RWPE1 (cell line): ENCODE measurements at regions of chr4 and their contacts with region 1.

Region 1: GRCh38 chr4:87848622-87849351 is 16.0 kb downstream of the MEPE start:
- DNase-seq: peak; percentile 55
- H3K27ac ChIP-seq: no peak overlapping the region
- CTCF ChIP-seq: peak; percentile 80

Region 2: DNA sequence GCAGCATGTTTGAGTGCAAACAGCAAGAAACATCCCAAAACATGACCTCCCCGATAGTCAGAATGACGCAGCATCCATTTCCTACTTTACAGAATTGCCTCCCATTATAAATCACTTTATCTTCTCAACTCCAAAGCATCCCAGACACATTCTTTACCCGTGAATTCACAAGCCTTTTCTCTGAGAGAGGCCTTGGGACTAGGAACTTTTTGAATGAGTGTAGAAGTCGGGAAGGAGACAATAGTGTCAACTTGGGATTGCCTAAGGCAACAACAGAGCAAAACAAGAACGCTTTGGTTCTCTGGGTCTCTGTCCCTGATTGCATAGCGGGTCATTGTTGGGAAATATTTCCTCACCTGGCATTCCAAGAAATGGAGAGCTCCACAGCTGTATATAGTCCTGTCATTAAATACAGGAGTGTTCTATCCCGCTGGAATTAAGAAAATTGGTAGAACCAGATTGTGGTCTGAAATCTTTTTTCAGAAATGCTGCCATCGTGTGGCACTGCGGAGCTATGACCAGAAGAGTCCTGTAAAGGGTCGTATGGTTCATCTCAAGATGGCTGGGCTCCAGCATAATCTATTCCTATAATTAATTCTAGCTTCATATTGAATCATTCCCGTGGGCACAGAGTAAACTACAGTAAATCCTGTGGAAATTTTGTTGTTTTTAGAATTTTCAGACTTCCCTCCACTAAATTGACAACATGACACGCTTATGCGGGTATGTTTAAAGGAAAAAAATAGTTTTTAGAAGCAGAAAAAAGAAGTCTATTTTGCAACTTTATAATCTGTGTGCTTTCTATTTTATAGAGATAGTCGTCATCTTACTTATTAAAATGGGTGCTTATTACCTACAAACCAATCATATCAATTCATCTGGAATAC is 124.7 kb after region 1 on chr4:
- CTCF ChIA-PET with region 1: interaction called, 23 read pairs
- POLR2A ChIA-PET with region 1: no interaction called
- DNase-seq: peak; percentile 46
- H3K27ac ChIP-seq: no peak overlapping the region
- CTCF ChIP-seq: peak; percentile 83

Region 3: GRCh38 chr4:87978681-87979080 is 129.9 kb after region 1 on chr4:
- CTCF ChIA-PET with region 1: interaction called, 23 read pairs
- POLR2A ChIA-PET with region 1: no interaction called
- DNase-seq: no peak
- H3K27ac ChIP-seq: no peak overlapping the region
- CTCF ChIP-seq: no peak

Region 4: GRCh38 chr4:87985097-87985886 is 136.5 kb after region 1 on chr4:
- CTCF ChIA-PET with region 1: interaction called, 26 read pairs
- POLR2A ChIA-PET with region 1: no interaction called
- DNase-seq: peak; percentile 33
- H3K27ac ChIP-seq: no peak overlapping the region
- CTCF ChIP-seq: peak; percentile 58

Region 5: GRCh38 chr4:88130544-88131305 is 281.9 kb after region 1 on chr4:
- CTCF ChIA-PET with region 1: no interaction called
- POLR2A ChIA-PET with region 1: no interaction called
- DNase-seq: no peak
- H3K27ac ChIP-seq: no peak overlapping the region
- CTCF ChIP-seq: no peak